Mammary epithelial cell (primary cell): ENCODE measurements at regions of chr4 and their contacts with region 1.

Region 1: DNA sequence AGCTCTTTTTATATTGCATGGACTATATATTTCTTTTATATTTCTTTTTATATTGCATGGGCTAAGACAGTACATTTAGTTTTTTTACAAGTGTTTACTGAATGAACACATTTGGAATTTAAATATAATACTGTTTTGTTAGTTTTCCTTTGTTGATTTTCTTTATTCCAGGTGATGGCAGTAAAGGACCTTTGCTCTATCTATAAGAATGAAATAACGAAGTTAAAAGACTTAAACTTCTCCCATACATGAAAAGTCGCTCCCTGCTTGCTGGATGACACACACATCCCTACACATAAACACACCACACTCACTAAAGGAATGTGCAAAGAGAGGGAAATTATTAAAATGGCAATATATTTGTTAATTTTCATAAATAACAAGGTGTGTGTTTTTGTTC is 102.5 kb upstream of the ANXA10 start:
- DNase-seq: no peak
- H3K4me3 ChIP-seq: no peak overlapping the region
- H3K27ac ChIP-seq: no peak overlapping the region
- H3K4me1 ChIP-seq: no peaks in the 10 kb centered on the region
- H3K27me3 ChIP-seq: peaks cover 5% of the 10 kb centered on the region
- CTCF ChIP-seq: peak; percentile 4 to 35

Region 2: DNA sequence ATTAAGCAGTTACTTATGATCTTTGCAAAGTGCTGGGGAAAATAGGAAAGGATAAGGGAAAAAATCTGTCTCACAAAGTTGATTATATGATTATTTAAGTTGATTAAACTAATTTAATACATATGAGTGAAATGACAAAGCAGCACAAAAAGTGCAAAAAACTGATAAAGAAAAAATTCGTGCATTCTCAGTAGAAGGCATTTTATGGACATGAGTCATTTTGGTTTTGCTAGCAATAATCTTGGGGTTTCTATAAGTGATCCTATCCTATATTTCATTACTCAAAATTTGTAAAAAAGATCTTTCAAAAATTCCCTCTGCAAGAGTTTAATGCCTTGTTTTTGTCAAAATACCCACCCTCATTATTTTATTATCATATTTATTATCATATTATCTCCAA is 121.7 kb before region 1 on chr4:
- CTCF ChIA-PET with region 1: no interaction called
- dilution Hi-C with region 1: no loop called
- in situ Hi-C with region 1: no loop called
- intact Hi-C with region 1: loop called (anchors 10 kb)
- DNase-seq: no peak
- H3K4me3 ChIP-seq: no peak overlapping the region
- H3K27ac ChIP-seq: no peak overlapping the region
- H3K4me1 ChIP-seq: no peaks in the 10 kb centered on the region
- H3K27me3 ChIP-seq: no peaks in the 10 kb centered on the region
- CTCF ChIP-seq: no peak